Sciatic nerve (tissue), 2 donors: ENCODE measurements at regions of chr6 and their contacts with region 1.

Region 1: GRCh38 chr6:70547313-70547712 is 19.4 kb upstream of the SDHAF4 start:
- DNase-seq: no peak
- ATAC-seq: peak; percentile 48

Region 2: GRCh38 chr6:70196531-70196930 is 350.8 kb before region 1 on chr6:
- intact Hi-C with region 1: no loop called
- DNase-seq: no peak
- ATAC-seq: no peak

Region 3: GRCh38 chr6:70336996-70337742 is 210.1 kb before region 1 on chr6:
- intact Hi-C with region 1: no loop called
- DNase-seq: no peak
- ATAC-seq: no peak

Region 4: DNA sequence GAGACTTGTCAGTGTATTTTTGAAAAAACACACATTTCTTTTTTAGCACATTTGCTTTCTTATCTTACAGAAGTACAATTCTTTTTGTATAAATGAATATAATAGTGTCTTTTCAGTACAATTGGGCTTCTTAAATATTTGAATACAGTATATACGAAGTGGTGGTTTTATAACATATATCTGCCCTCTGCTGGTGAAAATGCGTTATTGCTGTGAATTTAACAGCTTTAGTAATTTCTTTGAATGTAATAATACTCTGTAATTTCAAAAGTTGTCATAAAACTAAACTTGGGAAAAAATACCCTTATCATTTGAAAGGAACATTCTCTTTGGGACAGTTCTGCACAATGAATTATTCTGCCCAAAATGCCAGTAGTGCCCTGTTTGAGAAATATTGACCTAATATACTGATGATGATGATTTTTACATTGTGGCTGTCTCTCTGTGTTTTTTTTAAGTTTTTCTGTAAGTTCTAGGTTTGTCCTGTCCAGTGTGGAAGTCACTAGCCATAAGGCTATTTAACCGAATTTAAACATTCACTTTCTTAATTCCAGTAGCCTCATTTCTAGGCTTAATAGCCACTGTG is 139.3 kb after region 1 on chr6:
- intact Hi-C with region 1: loop called (anchors 10 kb)
- DNase-seq: no peak
- ATAC-seq: peak; percentile 53

Region 5: GRCh38 chr6:70811788-70812187 is 264.5 kb after region 1 on chr6:
- intact Hi-C with region 1: no loop called
- DNase-seq: no peak
- ATAC-seq: no peak